A673 (cell line): ENCODE measurements at regions of chr10 and their contacts with region 1.

Region 1: DNA sequence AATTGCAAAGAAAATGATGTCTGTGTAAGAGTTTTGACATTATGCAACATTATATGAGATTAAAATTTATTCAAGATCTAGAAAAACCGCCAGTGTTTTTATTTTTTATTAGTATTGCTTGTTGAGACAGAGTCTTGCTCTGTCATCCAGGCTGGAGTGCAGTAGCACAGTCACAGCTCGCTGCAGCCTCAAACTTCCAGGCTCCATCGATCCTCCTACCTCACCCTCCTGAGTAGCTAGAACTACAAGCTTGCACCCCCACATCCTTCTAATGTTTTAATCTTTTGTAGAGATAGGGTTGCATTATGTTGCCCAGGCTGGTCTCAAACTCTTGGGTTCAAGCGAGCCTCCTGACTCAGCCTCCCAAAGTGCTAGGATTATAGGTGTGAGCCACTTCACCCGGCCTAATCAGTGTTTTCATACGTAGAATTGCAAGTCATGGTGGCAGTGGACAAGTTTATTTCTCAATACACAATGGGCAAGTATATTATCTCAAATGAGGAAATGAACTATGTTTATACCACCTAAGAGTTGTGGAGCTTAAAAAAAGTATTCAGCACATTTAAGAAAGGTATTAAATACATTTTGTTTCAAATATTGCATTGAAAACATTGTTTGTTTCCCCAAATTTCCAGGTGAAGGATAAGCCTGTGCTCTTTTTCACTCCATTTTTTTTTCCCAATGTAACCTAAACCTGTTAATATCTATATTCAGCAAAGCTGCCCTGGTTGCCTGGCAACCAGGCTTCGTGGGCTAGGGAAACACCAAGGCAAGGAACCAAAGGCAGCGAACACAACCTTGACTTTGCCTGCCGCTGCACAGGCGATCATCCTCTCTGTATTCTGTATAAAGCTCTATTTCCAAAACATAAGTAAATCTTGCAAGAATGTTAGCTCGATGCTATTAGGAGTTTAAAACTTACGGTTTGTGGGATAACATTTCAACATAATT is 163.9 kb downstream of the CACNB2 start:
- DNase-seq: peak; percentile 33
- H3K4me3 ChIP-seq: no peak overlapping the region
- H3K27ac ChIP-seq: no peak overlapping the region
- H3K4me1 ChIP-seq: peaks cover 11% of the 10 kb centered on the region
- H3K27me3 ChIP-seq: no peaks in the 10 kb centered on the region
- CTCF ChIP-seq: no peak

Region 2: DNA sequence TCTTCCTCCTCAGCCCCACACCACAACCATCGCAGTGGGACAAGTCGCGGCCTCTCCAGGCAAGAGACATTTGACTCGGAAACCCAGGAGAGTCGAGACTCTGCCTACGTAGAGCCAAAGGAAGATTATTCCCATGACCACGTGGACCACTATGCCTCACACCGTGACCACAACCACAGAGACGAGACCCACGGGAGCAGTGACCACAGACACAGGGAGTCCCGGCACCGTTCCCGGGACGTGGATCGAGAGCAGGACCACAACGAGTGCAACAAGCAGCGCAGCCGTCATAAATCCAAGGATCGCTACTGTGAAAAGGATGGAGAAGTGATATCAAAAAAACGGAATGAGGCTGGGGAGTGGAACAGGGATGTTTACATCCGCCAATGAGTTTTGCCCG is 235.2 kb after region 1 on chr10:
- CTCF ChIA-PET with region 1: no interaction called
- POLR2A ChIA-PET with region 1: no interaction called
- intact Hi-C with region 1: loop called (anchors 5 kb)
- DNase-seq: no peak
- H3K4me3 ChIP-seq: no peak overlapping the region
- H3K27ac ChIP-seq: no peak overlapping the region
- H3K4me1 ChIP-seq: no peaks in the 10 kb centered on the region
- H3K27me3 ChIP-seq: no peaks in the 10 kb centered on the region
- CTCF ChIP-seq: no peak